ENCODE measurements at regions of chr9 and their contacts with region 1.

Region 1: GRCh38 chr9:100879884-100880283 is 148.6 kb upstream of the PLPPR1 start:
- DNase-seq: no peak
- ATAC-seq: no peak
- H3K4me3 ChIP-seq: no peak overlapping the region
- H3K4me3 Mint-ChIP-seq: no peak overlapping the region
- H3K27ac ChIP-seq: no peak overlapping the region
- H3K27ac Mint-ChIP-seq: no peak overlapping the region
- H3K4me1 ChIP-seq: no peaks in the 10 kb centered on the region
- H3K4me1 Mint-ChIP-seq: no peaks in the 10 kb centered on the region
- H3K27me3 ChIP-seq: no peaks in the 10 kb centered on the region
- H3K27me3 Mint-ChIP-seq: no peaks in the 10 kb centered on the region
- CTCF ChIP-seq: no peak

Region 2: DNA sequence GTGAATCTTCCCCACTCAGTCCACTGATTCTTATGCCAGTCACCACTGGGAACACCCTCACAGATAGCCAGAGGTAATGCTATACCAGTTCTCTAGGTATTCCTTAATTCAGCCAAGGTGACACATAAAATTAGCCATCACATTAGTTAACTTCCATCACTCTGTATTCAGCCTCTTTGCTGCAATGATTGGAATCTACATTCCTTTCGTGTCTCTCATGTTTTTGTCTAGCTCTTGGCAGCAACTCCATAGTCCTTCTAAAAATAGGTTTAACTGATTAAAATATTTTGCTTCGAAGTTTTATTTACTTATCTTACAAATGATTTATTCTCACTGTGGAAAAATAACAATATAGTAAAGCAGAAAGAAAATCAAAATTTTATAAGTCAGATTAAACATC is 634.2 kb after region 1 on chr9:
- CTCF ChIA-PET with region 1: no interaction called
- POLR2A ChIA-PET with region 1: no interaction called
- intact Hi-C with region 1: loop called in 1 of 2 experiments (anchors 5 kb)
- DNase-seq: no peak
- ATAC-seq: no peak
- H3K4me3 ChIP-seq: no peak overlapping the region
- H3K4me3 Mint-ChIP-seq: no peak overlapping the region
- H3K27ac ChIP-seq: no peak overlapping the region
- H3K27ac Mint-ChIP-seq: no peak overlapping the region
- H3K4me1 ChIP-seq: no peaks in the 10 kb centered on the region
- H3K4me1 Mint-ChIP-seq: no peaks in the 10 kb centered on the region
- H3K27me3 ChIP-seq: no peaks in the 10 kb centered on the region
- H3K27me3 Mint-ChIP-seq: peaks cover 19% of the 10 kb centered on the region
- CTCF ChIP-seq: no peak